Activated T-helper 1 cell treated with anti-CD3 and anti-CD28 coated beads, Interleukin-12 subunit alpha, Interleukin-12 subunit beta, Interleukin-2, Interleukin-4 antibody, amounts not matched to agents 30 ng/mL and 10 ng/mL and 1 ng/mL, durations not matched to agents 14 hours and 24 hours and 36 hours (primary cell): ENCODE measurements at regions of chr15 and their contacts with region 1.

Region 1: DNA sequence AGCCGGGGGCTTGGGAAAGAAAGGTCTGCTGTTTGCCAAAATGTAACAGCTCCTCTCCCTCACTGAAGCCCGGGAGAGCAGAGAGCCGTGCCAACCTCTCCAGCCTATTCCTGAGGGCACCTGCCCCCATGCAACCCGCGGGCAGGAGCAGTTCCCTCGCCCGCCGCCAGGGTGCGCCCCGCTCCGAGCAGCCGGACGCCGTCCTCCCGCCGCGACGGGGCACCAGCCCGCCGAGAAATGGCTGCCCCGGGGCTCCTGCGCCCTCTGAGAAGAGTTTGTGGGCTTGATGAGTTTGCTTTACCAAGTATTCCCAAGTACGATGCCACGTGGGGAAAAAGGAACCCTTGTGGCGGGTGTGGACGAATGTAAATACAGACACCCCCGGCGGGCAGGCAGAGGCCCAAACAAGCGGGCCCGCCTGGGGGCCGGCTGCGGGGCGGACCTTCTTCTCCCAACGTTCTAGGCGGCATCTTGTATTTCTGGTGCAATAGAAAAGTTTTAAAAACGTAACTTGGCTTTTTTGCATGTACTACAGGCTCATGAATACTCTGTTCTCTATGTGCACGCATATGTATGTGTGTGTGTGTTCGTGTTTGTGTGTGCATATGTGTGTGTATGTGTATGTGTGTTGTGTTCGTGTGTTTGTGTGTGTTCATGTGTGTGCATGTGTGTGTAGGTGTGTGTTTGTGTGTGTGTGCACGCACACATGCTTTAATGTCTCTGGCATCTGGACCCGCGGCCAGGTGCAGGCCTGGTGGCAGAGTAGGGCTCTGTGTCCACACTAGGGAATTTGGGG is 162.9 kb downstream of the CHSY1 start:
- DNase-seq: peak; percentile 69
- H3K4me3 Mint-ChIP-seq: no peak overlapping the region
- H3K27ac Mint-ChIP-seq: peak overlapping the region; percentile 41
- H3K4me1 Mint-ChIP-seq: peaks cover 27% of the 10 kb centered on the region
- H3K27me3 Mint-ChIP-seq: peaks cover 3% of the 10 kb centered on the region

Region 2: DNA sequence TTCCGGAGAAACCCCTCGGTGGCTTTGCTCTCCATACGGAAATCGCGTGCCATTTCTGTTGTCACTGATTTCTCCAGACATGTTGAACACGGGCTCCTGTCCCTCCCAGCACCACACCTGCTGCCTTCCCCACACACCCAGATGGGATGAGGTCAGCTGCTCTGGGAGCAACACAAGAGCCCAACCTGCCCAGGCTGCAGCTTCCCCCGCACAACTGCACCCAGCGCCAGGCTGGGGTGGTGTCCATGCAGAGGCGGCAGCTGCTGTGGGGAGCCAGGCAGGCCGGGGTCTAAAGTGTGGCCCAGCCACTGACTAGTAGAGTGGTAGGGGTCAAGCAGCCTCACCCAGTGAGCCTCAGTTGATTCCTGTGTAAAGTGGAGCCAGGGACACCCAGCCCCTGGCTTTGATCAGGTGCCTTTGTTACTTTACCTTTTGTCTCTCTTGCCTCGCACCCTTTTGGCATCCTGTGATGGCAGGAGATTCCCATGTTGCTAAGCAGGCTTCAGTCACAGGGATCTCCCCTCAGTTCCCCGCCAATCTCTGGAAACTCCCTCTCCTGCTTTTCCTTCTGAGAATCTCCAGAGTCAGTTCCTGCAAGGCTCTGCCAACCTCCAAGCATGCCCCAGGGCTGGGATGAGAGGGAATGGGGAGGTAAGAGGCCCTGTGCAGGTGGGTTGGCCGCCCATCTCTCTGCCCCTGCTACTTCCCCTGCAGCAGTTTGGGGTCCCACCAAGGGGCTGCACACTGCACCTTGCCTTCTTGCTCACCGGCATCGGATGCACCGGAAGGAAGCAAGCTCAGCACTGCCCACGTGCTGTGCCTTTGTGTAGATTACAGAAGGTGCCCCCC is 301.2 kb before region 1 on chr15:
- intact Hi-C with region 1: no loop called
- DNase-seq: no peak
- H3K4me3 Mint-ChIP-seq: no peak overlapping the region
- H3K27ac Mint-ChIP-seq: no peak overlapping the region
- H3K4me1 Mint-ChIP-seq: no peaks in the 10 kb centered on the region
- H3K27me3 Mint-ChIP-seq: peaks cover 2% of the 10 kb centered on the region

Region 3: GRCh38 chr15:101014921-101015841 is 73.8 kb before region 1 on chr15:
- intact Hi-C with region 1: loop called (anchors 1 kb)
- DNase-seq: peak; percentile 49
- H3K4me3 Mint-ChIP-seq: no peak overlapping the region
- H3K27ac Mint-ChIP-seq: no peak overlapping the region
- H3K4me1 Mint-ChIP-seq: peaks cover 5% of the 10 kb centered on the region
- H3K27me3 Mint-ChIP-seq: peaks cover 6% of the 10 kb centered on the region

Region 4: DNA sequence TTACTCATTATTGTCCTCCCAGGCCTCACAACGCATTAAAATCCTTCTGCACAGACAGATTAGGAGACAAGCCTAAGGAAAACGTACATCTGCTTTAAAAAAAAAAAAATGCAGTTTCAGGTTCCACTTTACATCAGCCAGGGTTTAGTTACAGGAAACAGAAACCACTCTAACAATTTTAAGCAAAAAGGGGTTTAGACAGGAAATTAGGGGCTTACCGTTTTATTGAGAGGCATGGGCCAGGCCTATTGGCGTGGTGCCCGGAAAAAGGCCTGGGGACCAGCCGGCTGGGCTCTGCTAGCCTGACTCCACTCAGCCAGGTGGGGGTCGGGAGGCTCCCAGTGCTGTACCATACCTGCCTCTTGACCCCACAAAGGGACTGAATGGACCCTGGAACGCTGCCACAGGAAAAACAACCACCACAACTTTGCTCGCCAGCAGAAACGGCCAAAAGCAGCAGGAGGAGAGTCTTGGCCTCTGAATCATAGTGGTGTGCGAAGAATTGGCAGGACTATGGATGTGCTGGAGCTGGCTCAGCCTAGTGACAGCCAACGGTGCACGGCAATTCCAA is 38.6 kb after region 1 on chr15:
- intact Hi-C with region 1: loop called (anchors 5 kb)
- DNase-seq: peak; percentile 41
- H3K4me3 Mint-ChIP-seq: peak overlapping the region; percentile 75
- H3K27ac Mint-ChIP-seq: peak overlapping the region; percentile 90
- H3K4me1 Mint-ChIP-seq: peaks cover 63% of the 10 kb centered on the region
- H3K27me3 Mint-ChIP-seq: no peaks in the 10 kb centered on the region

Region 5: DNA sequence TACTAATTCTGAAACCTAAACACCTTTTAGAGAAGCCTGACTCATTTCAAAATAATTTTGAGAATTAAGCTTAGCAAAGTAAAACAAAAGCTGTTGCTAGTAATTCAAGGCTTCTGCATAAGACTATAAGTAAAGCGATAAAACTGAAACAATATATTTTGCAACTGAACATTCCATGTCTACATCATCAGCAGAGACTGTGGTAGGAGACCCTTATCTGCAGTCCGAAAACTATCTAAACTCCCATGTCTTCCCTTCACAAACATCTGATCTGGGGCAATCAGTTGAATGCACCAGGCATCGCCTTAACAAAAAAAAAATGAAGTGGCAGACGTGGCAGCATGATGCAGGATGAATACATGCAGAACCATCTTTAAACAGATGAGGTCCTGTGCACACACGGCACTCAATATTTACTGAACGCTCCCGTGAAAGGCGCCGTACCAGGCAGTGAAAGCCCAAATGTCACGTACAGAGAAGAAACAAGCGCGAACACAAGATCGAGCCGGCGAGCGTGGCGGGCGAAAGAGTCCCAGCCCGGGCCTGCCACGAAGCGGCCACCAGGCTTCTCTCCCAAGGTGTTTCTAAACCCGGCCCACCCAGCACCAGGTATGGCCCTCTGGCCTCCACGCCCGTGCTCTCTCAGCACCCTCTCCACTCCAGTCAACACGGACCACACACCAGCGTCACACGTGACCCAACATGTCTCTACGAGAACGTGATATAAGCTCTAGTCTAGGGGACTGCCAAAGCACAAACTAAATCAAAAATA is 99.8 kb after region 1 on chr15:
- intact Hi-C with region 1: loop called (anchors 5 kb)
- DNase-seq: no peak
- H3K4me3 Mint-ChIP-seq: peak overlapping the region; percentile 41
- H3K27ac Mint-ChIP-seq: peak overlapping the region; percentile 94
- H3K4me1 Mint-ChIP-seq: peaks cover 87% of the 10 kb centered on the region
- H3K27me3 Mint-ChIP-seq: no peaks in the 10 kb centered on the region

Region 6: DNA sequence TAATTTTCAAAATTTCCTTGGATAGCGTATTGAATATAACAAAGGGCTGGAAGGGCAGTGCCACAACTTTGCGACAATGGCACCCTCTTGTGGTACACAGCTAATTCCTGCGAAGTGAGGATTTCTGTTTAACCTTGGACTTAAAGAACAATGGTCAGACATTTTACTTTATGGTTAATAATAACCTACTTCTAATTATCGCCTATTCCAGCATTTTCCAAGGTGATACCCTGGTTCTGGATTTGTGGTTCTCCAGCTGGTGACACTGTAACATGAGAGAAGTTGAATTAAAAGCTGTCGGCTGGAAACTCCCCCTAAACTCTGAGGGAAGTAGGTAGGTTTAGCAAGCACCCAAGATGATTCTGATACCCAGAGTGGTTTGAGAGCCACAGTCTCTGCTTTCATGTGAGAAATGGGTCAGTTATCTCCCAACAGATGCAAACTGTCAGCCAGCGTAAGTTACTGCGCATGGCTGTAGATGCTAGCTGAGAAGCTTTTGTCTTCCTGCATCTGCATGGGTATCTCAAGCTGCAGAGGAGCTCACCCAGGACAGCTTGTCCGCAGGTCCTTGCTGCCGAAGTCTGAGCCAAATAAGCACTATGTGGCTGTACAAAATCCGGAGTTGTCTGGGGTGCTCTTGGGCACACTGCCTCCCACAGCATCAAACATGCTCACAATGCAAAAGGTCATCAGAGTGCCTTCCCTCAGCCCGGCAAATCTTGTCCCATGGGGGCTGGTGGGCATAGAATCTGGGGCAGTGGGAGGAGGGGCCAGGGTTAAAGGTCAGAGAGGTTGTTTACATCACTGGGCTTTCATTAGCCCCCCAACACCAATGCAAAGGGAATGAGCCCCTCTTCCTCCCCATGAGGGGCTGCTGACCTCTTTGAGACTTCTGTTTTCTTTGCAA is 169.5 kb after region 1 on chr15:
- intact Hi-C with region 1: loop called (anchors 1 kb)
- DNase-seq: peak; percentile 26
- H3K4me3 Mint-ChIP-seq: no peak overlapping the region
- H3K27ac Mint-ChIP-seq: peak overlapping the region; percentile 5
- H3K4me1 Mint-ChIP-seq: peaks cover 37% of the 10 kb centered on the region
- H3K27me3 Mint-ChIP-seq: peaks cover 19% of the 10 kb centered on the region